Right lobe of liver (tissue), 6 donors: ENCODE measurements at regions of chr19 and their contacts with region 1.

Region 1: GRCh38 chr19:49196527-49197240 is 39.1 kb downstream of the TRPM4 start:
- DNase-seq: peak in 1 of 3 donors; percentile 40
- ATAC-seq: peak in 1 of 4 donors; percentile 39
- H3K4me3 ChIP-seq: no peak overlapping the region
- H3K27ac ChIP-seq: no peak overlapping the region
- H3K4me1 ChIP-seq: no peaks in the 10 kb centered on the region
- H3K27me3 ChIP-seq: no peaks in the 10 kb centered on the region
- CTCF ChIP-seq: no peak
- POLR2A ChIP-seq: no peak

Region 2: GRCh38 chr19:49084206-49085019 is 112.3 kb before region 1 on chr19:
- intact Hi-C with region 1: no loop called
- DNase-seq: no peak
- ATAC-seq: no peak
- H3K4me3 ChIP-seq: peak overlapping the region; percentile 64 to 99 (median 79)
- H3K27ac ChIP-seq: peak overlapping the region; percentile 12 to 79 (median 72)
- H3K4me1 ChIP-seq: peaks cover 0 to 12% (median 3%) of the 10 kb centered on the region in 4 donors
- H3K27me3 ChIP-seq: no peaks in the 10 kb centered on the region
- CTCF ChIP-seq: no peak
- POLR2A ChIP-seq: no peak

Region 3: DNA sequence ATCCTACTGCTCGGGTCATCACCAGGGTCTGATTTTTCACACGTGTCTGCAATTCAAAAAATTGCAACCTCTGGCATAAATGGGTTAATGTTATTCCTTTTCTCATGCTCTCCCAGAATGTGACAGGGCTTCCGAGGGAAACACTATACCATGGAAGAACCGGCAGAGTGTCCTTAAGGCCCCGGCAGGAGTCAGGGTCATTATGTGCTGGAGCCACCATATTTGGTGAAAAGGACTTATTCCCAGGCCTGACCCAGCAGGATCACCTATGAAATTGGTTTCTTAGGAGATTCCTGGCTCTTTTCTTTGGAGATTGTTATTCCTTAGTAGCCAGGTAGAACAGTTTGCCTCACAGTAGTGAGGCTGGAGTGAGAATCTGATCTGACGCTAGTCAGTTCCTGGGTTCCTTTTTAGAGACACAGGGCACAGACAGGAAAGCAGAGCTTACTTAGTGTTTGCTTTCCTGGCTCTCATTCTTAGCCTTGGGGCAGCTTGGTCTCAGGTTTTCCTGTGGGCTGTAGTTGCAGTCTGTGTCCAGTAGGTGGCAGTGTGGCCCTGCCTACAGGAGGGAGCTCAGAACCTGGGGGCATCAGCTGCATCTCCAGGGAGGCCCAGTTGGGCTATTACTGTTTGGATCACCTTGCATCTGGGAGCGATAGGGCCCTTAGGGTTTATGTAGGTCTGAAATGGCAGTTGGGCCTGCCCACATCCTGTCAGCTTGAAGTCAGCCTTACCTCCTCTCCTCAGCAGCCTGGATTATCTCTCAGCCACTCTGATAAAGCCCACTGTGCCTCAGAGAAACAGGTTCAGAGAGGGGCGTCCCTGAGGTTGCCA is 99.0 kb before region 1 on chr19:
- intact Hi-C with region 1: loop called (anchors 5 to 10 kb)
- DNase-seq: peak in 2 of 3 donors; percentile 60 to 76
- ATAC-seq: peak; percentile 84 to 92 (median 88)
- H3K4me3 ChIP-seq: no peak overlapping the region
- H3K27ac ChIP-seq: peak overlapping the region in 1 of 3 donors; percentile 49
- H3K4me1 ChIP-seq: peaks cover 0 to 26% (median 7%) of the 10 kb centered on the region in 4 donors
- H3K27me3 ChIP-seq: no peaks in the 10 kb centered on the region
- CTCF ChIP-seq: peak; percentile 96 to 100 (median 100)
- POLR2A ChIP-seq: no peak

Region 4: GRCh38 chr19:49104229-49104864 is 92.3 kb before region 1 on chr19:
- intact Hi-C with region 1: loop called (anchors 5 to 10 kb)
- DNase-seq: no peak
- ATAC-seq: no peak
- H3K4me3 ChIP-seq: no peak overlapping the region
- H3K27ac ChIP-seq: no peak overlapping the region
- H3K4me1 ChIP-seq: peaks cover 0 to under 1% (median 0%) of the 10 kb centered on the region in 4 donors
- H3K27me3 ChIP-seq: no peaks in the 10 kb centered on the region
- CTCF ChIP-seq: no peak
- POLR2A ChIP-seq: no peak